Prostate gland (tissue), 2 donors: ENCODE measurements at regions of chr9 and their contacts with region 1.

Region 1: DNA sequence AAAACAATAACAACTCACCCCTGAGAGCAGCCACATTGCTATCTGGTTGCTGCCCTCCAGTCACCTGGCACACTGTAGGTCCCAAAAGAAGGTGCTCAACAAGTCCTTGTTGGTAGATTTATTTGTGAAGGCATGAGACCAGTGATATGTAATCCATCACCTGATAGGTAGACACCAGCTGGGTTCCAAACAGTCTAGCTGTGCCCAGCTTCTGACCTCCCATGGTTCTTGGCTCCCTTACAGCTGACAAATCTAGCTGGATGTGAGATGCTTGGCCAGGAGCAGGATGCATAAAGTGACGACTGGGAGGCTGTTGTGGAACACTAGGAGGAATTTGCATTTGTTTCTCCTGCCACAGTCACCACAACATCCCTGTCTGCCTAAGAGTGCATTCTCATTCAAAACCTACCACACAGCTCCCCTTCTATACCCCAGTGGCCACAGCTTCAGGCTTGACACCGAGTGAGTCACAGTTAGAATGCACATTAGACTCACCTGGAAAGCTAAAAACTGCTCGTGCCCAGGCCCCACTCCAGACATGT is 7.8 kb upstream of the VLDLR start:
- DNase-seq: no peak
- H3K4me3 ChIP-seq: no peak overlapping the region
- H3K27ac ChIP-seq: no peak overlapping the region
- H3K4me1 ChIP-seq: peaks cover 2% of the 10 kb centered on the region
- H3K27me3 ChIP-seq: no peaks in the 10 kb centered on the region
- CTCF ChIP-seq: no peak
- POLR2A ChIP-seq: no peak

Region 2: GRCh38 chr9:2336055-2336454 is 277.7 kb before region 1 on chr9:
- intact Hi-C with region 1: loop called (anchors 10 kb)
- DNase-seq: no peak
- H3K4me3 ChIP-seq: no peak overlapping the region
- H3K27ac ChIP-seq: no peak overlapping the region
- H3K4me1 ChIP-seq: peaks cover 3% of the 10 kb centered on the region
- H3K27me3 ChIP-seq: no peaks in the 10 kb centered on the region
- CTCF ChIP-seq: no peak
- POLR2A ChIP-seq: no peak